Activated naive CD4-positive, alpha-beta T cell treated with anti-CD3 and anti-CD28 coated beads for 36 hours (primary cell): ENCODE measurements at regions of chr10 and their contacts with region 1.

Region 1: GRCh38 chr10:58268870-58269605 is at the start of gene CISD1:
- DNase-seq: peak; percentile 95
- H3K4me3 Mint-ChIP-seq: peak within 1 kb of the TSS; percentile 96
- H3K27ac Mint-ChIP-seq: peak within 1 kb of the TSS; percentile 93
- H3K4me1 Mint-ChIP-seq: peaks cover 27% of the 10 kb centered on the region
- H3K27me3 Mint-ChIP-seq: no peaks in the 10 kb centered on the region
- total RNA-seq, gene CISD1: 52.7 to 55.0 TPM

Region 2: GRCh38 chr10:56360967-56361612 is 1907.9 kb before region 1 on chr10 and contains the start of gene ZWINT:
- CTCF ChIA-PET with region 1: no interaction called
- intact Hi-C with region 1: loop called (anchors 1 kb)
- DNase-seq: peak; percentile 95
- H3K4me3 Mint-ChIP-seq: peak within 1 kb of the TSS; percentile 96
- H3K27ac Mint-ChIP-seq: peak within 1 kb of the TSS; percentile 91
- H3K4me1 Mint-ChIP-seq: peaks cover 30% of the 10 kb centered on the region
- H3K27me3 Mint-ChIP-seq: no peaks in the 10 kb centered on the region
- total RNA-seq, gene ZWINT: 80.8 to 85.4 TPM

Region 3: GRCh38 chr10:58237014-58237830 is 31.8 kb before region 1 on chr10:
- CTCF ChIA-PET with region 1: no interaction called
- intact Hi-C with region 1: loop called (anchors 1 kb)
- DNase-seq: peak; percentile 23
- H3K4me3 Mint-ChIP-seq: no peak overlapping the region
- H3K27ac Mint-ChIP-seq: peak overlapping the region; percentile 89
- H3K4me1 Mint-ChIP-seq: peaks cover 47% of the 10 kb centered on the region
- H3K27me3 Mint-ChIP-seq: no peaks in the 10 kb centered on the region

Region 4: GRCh38 chr10:58334817-58335305 is 65.8 kb after region 1 on chr10 and contains the start of gene UBE2D1:
- CTCF ChIA-PET with region 1: no interaction called
- intact Hi-C with region 1: loop called (anchors 1 kb)
- DNase-seq: peak; percentile 88
- H3K4me3 Mint-ChIP-seq: peak within 1 kb of the TSS; percentile 95
- H3K27ac Mint-ChIP-seq: peak within 1 kb of the TSS; percentile 78
- H3K4me1 Mint-ChIP-seq: peaks cover 33% of the 10 kb centered on the region
- H3K27me3 Mint-ChIP-seq: no peaks in the 10 kb centered on the region
- total RNA-seq, gene UBE2D1: 8.7 to 9.3 TPM

Region 5: DNA sequence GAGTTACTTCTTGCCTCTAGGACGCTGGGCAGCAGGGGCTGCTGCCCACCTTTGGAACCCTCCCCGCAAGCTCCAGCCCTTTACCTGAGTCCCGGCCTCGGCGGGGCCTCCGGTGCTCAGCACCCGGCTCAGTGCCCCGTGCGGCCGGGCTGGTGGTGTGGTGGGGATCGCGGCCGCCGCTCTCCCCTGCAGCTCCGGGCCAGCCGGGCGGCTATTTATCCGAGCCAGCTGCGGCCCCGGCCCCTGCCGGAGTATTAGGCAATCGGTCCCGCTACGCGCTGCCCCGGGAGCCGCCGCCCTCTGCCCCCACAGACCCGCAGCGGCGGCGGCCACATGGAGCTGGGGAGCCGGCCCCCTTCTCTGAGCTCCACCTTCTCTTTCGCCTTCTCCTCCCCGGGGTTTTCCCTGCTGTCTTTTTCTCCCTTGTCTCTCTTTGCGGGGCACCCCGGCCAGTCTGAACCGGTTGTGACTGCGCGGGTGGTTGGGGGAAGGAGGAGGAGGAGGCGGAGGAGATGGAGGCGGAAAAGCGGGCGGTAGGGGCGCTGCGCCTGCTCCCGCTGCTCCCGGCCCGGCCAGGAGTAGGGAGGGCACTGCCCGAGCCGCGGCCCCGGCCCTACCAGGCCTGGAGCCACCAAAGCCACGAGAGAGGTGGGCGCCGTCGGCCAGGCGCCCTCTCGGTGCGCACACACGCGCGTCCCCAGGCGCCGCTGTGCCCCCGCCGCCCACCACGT is 1440.5 kb after region 1 on chr10 and contains the start of gene SLC16A9:
- CTCF ChIA-PET with region 1: no interaction called
- intact Hi-C with region 1: loop called (anchors 5 kb)
- DNase-seq: peak; percentile 89
- H3K4me3 Mint-ChIP-seq: peak within 1 kb of the TSS; percentile 72
- H3K27ac Mint-ChIP-seq: no peak within 1 kb of the TSS
- H3K4me1 Mint-ChIP-seq: peaks cover 8% of the 10 kb centered on the region
- H3K27me3 Mint-ChIP-seq: peaks cover 62% of the 10 kb centered on the region
- total RNA-seq, gene SLC16A9: 0.84 to 0.86 TPM